PC-3 (cell line): ENCODE measurements at regions of chr12 and their contacts with region 1.

Region 1: GRCh38 chr12:55930771-55931316 is at the start of gene DGKA:
- DNase-seq: peak; percentile 75
- ATAC-seq: peak; percentile 23
- H3K4me3 ChIP-seq: peak within 1 kb of the TSS; percentile 82
- H3K27ac ChIP-seq: peak within 1 kb of the TSS; percentile 38
- H3K4me1 ChIP-seq: peaks cover 47% of the 10 kb centered on the region
- H3K27me3 ChIP-seq: no peaks in the 10 kb centered on the region
- CTCF ChIP-seq: peak; percentile 81
- total RNA-seq, gene DGKA: 27.2 and 41.5 TPM in 2 replicates

Region 2: DNA sequence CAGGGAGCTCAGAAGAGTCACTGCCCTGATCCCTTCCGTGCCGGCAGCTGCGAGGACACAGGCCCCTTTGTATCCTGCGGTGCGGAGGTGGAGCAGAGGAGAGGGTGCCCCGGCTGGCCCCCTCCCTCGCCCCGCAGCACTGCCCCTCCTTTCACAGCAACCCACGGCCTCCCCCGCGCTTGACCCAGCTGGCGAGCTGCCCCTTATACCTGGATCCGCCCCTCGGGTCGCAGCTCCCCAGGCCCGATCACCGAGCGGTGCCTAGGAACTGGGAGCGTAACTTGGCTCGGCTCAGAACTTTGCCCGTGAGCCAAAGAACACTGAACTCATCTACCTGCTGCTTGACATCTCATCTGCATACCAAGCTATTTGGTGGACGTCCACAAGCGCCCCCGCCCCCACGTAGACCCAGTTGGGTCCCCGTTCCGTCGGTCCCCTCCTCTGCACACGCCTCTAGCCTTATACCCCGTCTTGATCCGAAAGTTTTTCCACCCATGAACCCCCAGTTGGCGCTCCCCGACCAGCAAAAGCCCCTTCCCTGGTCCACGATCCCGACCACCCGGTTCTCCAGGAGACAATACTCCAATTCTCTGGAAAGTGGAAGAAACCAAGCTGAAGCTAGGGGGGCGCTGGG is 100.8 kb before region 1 on chr12:
- CTCF ChIA-PET with region 1: interaction called, 10 read pairs
- POLR2A ChIA-PET with region 1: interaction called, 3 read pairs
- intact Hi-C with region 1: no loop called
- DNase-seq: peak; percentile 24
- ATAC-seq: peak; percentile 42
- H3K4me3 ChIP-seq: peak overlapping the region; percentile 83
- H3K27ac ChIP-seq: peak overlapping the region; percentile 66
- H3K4me1 ChIP-seq: peaks cover 24% of the 10 kb centered on the region
- H3K27me3 ChIP-seq: no peaks in the 10 kb centered on the region
- CTCF ChIP-seq: no peak

Region 3: GRCh38 chr12:56104109-56104814 is 173.4 kb after region 1 on chr12 and contains the start of gene PA2G4:
- CTCF ChIA-PET with region 1: no interaction called
- POLR2A ChIA-PET with region 1: no interaction called
- intact Hi-C with region 1: no loop called
- DNase-seq: peak; percentile 100
- ATAC-seq: peak; percentile 96
- H3K4me3 ChIP-seq: peak within 1 kb of the TSS; percentile 91
- H3K27ac ChIP-seq: peak within 1 kb of the TSS; percentile 81
- H3K4me1 ChIP-seq: peaks cover 25% of the 10 kb centered on the region
- H3K27me3 ChIP-seq: no peaks in the 10 kb centered on the region
- CTCF ChIP-seq: no peak
- total RNA-seq, gene PA2G4: 391 and 406 TPM in 2 replicates

Region 4: DNA sequence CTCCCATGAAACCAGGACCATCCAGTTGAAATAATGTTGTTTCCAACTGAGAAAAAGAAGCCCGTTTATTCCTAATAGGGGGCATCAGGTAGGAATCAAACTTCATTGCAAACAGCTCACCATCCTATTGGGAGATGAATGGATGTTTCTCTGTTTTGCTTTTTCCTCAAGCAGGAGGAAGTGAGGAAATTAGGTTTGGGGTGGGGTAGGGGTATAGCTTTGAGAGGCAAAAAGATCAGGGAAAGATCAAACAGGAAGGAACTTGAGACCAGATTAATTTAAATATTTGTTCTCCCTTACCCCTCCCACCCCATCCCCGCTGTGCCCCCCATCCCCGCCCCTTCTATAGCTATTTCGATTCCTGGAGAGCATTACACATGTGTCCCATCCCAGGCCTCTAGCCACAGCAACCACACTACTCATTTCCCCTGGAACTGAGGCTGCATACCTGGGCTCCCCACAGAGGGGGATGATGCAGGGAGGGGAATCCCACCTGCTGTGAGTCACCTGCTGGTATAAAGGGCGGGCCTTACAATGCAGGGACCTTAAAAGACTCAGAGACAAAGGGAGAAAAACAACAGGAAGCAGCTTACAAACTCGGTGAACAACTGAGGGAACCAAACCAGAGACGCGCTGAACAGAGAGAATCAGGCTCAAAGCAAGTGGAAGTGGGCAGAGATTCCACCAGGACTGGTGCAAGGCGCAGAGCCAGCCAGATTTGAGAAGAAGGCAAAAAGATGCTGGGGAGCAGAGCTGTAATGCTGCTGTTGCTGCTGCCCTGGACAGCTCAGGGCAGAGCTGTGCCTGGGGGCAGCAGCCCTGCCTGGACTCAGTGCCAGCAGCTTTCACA is 407.7 kb after region 1 on chr12 and contains the start of gene IL23A:
- CTCF ChIA-PET with region 1: no interaction called
- POLR2A ChIA-PET with region 1: no interaction called
- intact Hi-C with region 1: no loop called
- DNase-seq: peak; percentile 88
- ATAC-seq: peak; percentile 27
- H3K4me3 ChIP-seq: peak within 1 kb of the TSS; percentile 17; the same call in 1 of the 2 replicates
- H3K27ac ChIP-seq: peak within 1 kb of the TSS; percentile 81
- H3K4me1 ChIP-seq: peaks cover 30% of the 10 kb centered on the region
- H3K27me3 ChIP-seq: no peaks in the 10 kb centered on the region
- CTCF ChIP-seq: no peak
- total RNA-seq, gene IL23A: 17.5 and 18.2 TPM in 2 replicates